Activated CD4-positive, alpha-beta memory T cell treated with anti-CD3 and anti-CD28 coated beads for 36 hours (primary cell): ENCODE measurements at regions of chr11 and their contacts with region 1.

Region 1: GRCh38 chr11:124673333-124674167 is at the starts of genes SIAE and SPA17:
- DNase-seq: peak; percentile 94
- H3K4me3 Mint-ChIP-seq: peak within 1 kb of the TSS; percentile 87
- H3K27ac Mint-ChIP-seq: peak within 1 kb of the TSS; percentile 79
- H3K4me1 Mint-ChIP-seq: peaks cover 29% of the 10 kb centered on the region
- H3K27me3 Mint-ChIP-seq: no peaks in the 10 kb centered on the region
- total RNA-seq, gene SIAE: 11.8 to 12.1 TPM
- total RNA-seq, gene SPA17: 5.0 to 6.7 TPM

Region 2: GRCh38 chr11:124622531-124623451 is 50.8 kb before region 1 on chr11 and contains the start of gene TBRG1:
- CTCF ChIA-PET with region 1: interaction called, 9 read pairs
- POLR2A ChIA-PET with region 1: interaction called, 3 read pairs
- intact Hi-C with region 1: loop called (anchors 2 kb)
- DNase-seq: peak; percentile 87
- H3K4me3 Mint-ChIP-seq: peak within 1 kb of the TSS; percentile 85
- H3K27ac Mint-ChIP-seq: peak within 1 kb of the TSS; percentile 93
- H3K4me1 Mint-ChIP-seq: peaks cover 28% of the 10 kb centered on the region
- H3K27me3 Mint-ChIP-seq: peaks cover 2% of the 10 kb centered on the region
- total RNA-seq, gene TBRG1: 33.5 to 34.5 TPM

Region 3: GRCh38 chr11:124739479-124740276 is 66.1 kb after region 1 on chr11 and contains the start of gene NRGN:
- CTCF ChIA-PET with region 1: interaction called, 7 read pairs
- POLR2A ChIA-PET with region 1: no interaction called
- intact Hi-C with region 1: loop called (anchors 1 kb)
- DNase-seq: peak; percentile 91
- H3K4me3 Mint-ChIP-seq: peak within 1 kb of the TSS; percentile 79
- H3K27ac Mint-ChIP-seq: no peak within 1 kb of the TSS
- H3K4me1 Mint-ChIP-seq: peaks cover 10% of the 10 kb centered on the region
- H3K27me3 Mint-ChIP-seq: peaks cover 3% of the 10 kb centered on the region
- total RNA-seq, gene NRGN: 15.3 to 17.0 TPM

Region 4: GRCh38 chr11:124758317-124759203 is 85.0 kb after region 1 on chr11:
- CTCF ChIA-PET with region 1: interaction called, 99 read pairs
- POLR2A ChIA-PET with region 1: interaction called, 4 read pairs
- intact Hi-C with region 1: loop called (anchors 1 kb)
- DNase-seq: peak; percentile 83
- H3K4me3 Mint-ChIP-seq: peak overlapping the region; percentile 54
- H3K27ac Mint-ChIP-seq: peak overlapping the region; percentile 35
- H3K4me1 Mint-ChIP-seq: peaks cover 19% of the 10 kb centered on the region
- H3K27me3 Mint-ChIP-seq: peaks cover 50% of the 10 kb centered on the region

Region 5: GRCh38 chr11:124837491-124837856 is 163.9 kb after region 1 on chr11:
- CTCF ChIA-PET with region 1: interaction called, 85 read pairs
- POLR2A ChIA-PET with region 1: no interaction called
- intact Hi-C with region 1: loop called (anchors 1 kb)
- DNase-seq: no peak
- H3K4me3 Mint-ChIP-seq: no peak overlapping the region
- H3K27ac Mint-ChIP-seq: no peak overlapping the region
- H3K4me1 Mint-ChIP-seq: peaks cover 9% of the 10 kb centered on the region
- H3K27me3 Mint-ChIP-seq: peaks cover 49% of the 10 kb centered on the region

Region 6: DNA sequence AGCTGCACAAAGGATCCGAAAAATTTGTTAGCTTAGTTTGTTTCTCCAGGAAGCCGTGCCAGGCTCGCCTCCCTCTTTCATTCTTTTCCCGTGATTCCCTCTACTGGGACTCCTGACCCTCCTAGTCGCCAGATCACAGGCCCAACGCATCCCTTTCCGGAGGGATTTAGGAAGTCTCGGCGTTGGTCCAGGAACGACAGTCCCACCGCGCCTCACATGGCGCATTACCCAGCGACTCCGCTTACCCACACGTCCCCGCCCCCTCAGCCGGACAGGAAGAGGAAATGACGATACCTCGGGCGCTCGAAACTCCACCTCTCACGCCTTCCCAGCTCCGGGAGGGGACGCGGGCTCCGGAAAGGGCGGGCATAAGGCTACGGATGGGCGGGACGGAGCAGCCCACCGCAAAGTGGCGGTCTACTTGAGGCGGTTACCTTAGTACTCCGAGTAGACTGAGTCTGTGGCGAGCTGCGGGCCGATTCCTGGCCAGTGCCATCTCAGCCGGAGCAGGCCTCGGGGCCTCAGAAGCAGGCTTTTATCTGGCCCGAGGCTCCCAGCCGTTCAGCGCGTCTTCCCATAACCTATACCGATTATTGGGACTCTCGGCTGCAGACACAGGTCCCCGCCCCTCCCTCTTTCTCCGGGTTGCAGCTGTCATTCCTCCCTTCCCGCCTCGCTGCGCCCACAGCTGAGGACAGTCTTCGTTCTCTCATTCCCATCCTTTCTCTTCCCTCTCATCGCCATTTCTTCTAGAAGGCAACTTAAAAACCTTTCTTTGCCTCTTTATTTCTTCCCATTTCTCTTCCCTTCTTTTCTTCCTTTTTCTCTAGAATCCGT is 280.4 kb after region 1 on chr11 and contains the start of gene CCDC15:
- CTCF ChIA-PET with region 1: interaction called, 3 read pairs
- POLR2A ChIA-PET with region 1: no interaction called
- intact Hi-C with region 1: loop called (anchors 5 kb)
- DNase-seq: peak; percentile 97
- H3K4me3 Mint-ChIP-seq: no peak within 1 kb of the TSS
- H3K27ac Mint-ChIP-seq: no peak within 1 kb of the TSS
- H3K4me1 Mint-ChIP-seq: peaks cover 8% of the 10 kb centered on the region
- H3K27me3 Mint-ChIP-seq: no peaks in the 10 kb centered on the region
- total RNA-seq, gene CCDC15: 5.6 to 6.4 TPM